ENCODE measurements at regions of chr4 and their contacts with region 1.

Region 1: DNA sequence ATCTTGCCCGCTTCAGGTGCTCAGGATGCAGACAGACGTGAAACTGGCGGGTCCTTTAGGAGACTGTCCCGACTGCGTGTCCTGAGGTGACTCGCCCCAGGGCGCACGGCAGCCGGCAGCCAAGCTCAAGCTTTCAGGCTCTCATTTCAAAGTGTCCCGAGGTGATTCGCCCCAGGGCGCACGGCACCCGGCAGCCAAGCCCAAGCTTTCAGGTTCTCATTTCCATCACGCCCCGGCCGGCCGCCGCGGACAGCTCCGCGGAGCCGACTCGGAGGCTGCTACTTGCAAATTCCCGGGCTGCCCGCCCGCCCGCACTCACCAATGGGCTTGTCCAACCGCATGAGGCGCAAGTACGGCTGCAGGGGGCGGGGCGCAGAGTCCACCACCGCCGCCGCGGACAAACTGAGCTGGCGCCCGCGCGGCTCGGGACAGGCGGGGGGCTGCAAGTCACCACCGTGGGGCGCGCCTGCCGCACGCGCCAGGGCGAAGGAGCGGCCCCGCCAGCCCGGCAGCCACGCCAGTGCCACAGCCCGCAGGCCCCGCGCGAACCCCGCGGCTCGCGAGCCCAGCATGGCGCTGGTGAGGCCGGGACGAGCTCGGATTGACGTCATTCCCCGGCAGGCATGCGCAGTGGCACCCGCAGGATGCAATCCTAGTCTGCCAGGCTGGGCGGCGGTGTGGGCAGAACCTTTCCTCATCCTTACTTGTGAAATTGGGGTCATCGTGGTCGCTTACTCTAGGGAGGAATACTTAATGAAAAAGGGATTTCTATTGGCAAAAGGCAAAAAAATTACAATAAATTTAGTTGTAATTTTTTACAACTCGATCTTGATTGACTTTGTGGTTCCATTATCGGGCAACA is at the start of gene COQ2:
- DNase-seq: peak; percentile 94 to 97 (median 95)
- H3K4me3 ChIP-seq: peak within 1 kb of the TSS; percentile 53 to 89 (median 77)
- H3K27ac ChIP-seq: peak within 1 kb of the TSS; percentile 61 to 99 (median 94)
- H3K27me3 ChIP-seq: no peaks in the 10 kb centered on the region
- CTCF ChIP-seq: peak in 55 of 56 donors; percentile 4 to 79 (median 48)
- total RNA-seq, gene COQ2: 3.6 to 10.1 (median 6.2) TPM

Region 2: DNA sequence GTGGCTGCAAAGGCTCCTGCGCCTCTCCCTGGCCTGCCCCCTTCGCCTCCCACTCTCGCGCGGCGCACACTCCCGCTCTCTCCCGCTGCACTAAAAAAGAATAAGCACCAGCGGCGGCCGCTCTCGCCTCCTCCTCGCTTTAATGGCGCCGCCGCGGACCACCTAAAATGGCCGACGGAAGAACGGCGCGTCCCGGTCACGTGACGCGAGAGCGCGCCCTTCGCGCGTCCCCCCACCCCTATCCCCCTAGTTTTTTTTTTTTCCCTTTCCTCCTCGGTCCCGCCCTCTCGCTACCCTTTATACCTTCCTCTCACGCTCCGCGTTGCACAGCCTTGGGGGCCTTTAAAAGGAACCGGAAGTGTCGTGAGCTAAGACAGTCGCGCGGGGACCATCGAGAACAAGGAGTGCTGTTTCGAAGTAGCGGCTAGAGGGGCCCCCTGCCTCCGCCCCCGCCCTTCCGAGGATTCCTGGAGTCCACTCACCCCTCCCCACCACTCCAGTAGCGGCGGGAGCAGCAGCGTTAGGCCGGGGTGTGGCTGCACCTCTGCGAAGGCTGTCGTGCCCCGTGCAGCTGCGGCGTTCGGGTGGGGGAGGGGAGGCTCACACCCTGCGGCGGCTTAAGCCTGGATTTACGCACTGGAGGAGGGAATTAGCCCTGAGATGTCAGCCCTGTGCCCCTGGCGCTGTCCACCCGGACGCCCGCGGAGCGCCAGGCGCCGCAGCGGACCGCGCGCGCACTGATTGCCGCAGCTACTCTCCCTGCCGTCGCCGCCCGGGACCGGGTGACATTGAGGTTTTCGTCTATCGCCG is 910.4 kb before region 1 on chr4 and contains the start of gene HNRNPD:
- intact Hi-C with region 1: loop called in 1 of 2 experiments (anchors 5 kb)
- DNase-seq: peak; percentile 91 to 98 (median 97)
- H3K4me3 ChIP-seq: peak within 1 kb of the TSS; percentile 65 to 99 (median 93)
- H3K27ac ChIP-seq: peak within 1 kb of the TSS; percentile 91 to 100 (median 98)
- H3K27me3 ChIP-seq: no peaks in the 10 kb centered on the region
- CTCF ChIP-seq: peak in 37 of 56 donors; percentile 5 to 63 (median 25)
- total RNA-seq, gene HNRNPD: 81.5 to 203 (median 140) TPM

Region 3: DNA sequence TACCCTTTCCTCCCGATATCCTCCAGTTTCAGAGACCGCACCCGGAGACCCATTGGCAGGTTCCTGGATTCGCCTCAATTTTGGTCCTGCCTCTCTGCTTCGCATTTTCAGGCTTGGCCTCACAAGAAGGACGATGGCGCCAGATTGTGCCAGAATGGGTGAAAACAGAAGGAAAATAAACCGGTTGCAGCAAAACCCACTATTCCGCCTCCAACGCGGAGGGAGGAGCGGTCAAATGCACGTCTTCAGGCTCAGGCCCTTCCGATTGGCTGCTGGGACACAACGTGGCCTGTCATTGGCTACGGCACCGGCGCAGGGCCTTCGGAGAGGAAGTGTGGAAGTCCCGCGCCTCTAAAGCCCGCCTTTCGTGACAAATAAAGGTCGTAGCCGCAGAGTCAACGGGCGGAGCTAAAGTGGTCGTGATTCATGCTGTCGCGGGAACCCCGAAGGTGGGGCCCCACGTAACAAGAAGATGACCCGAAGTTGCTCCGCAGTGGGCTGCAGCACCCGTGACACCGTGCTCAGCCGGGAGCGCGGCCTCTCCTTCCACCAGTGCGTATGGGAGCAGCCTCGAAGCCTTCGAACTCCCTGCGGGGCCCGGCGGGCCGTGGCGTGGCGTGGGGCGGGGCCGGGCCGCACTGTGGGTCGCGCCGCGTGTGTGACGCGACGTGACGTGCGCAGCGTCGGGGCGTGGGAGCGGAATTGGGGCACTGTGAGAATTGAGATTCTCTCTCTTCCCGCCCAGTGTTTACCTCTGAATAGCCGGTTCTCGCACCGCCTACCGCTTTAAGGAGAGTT is 383.9 kb before region 1 on chr4 and contains the start of gene THAP9:
- intact Hi-C with region 1: loop called in 1 of 2 experiments (anchors 5 kb)
- DNase-seq: peak; percentile 98 to 100 (median 99)
- H3K4me3 ChIP-seq: peak within 1 kb of the TSS; percentile 58 to 97 (median 85)
- H3K27ac ChIP-seq: peak within 1 kb of the TSS; percentile 80 to 100 (median 98)
- H3K27me3 ChIP-seq: no peaks in the 10 kb centered on the region
- CTCF ChIP-seq: peak in 20 of 56 donors; percentile 1 to 50 (median 15)
- total RNA-seq, gene THAP9: 4.1 to 16.4 (median 7.3) TPM

Region 4: DNA sequence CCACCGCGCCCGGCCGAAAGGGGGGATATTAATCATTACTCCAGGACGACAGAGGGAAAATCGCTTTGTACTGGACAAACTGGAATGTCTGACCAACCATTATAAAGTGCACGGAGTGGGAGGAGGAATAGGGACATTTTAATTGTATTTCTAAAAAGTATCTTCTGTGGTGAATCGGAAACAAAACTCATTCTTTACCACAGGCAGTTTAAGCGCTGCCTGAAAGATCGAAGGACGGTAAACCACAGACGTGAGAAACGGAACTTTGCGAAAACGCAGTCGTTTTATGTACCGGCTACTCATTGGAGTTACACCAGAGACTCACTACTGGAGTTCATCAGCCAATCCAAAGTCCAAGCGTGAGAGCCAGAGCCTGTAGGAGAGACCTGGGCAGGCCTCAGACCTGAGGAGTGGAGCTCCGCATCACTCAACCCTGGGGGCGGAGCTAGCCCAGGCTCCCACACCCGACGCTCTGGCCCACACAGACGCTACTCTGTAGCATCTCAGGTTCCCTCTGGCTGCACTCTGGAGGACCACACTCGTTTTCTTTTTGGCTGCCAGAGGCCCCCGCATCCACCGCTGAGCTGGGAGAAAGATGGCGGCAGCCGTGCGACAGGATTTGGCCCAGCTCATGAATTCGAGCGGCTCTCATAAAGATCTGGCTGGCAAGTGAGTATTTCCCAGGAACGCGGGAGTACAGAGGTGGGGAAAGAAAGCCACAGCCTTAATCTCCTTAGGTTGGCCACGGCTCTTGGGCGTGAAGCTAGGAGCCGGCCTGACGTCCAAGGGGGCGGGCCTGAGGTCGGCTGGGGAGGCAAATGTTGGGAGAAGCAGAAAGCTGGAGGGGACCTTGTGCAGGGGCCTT is 249.6 kb before region 1 on chr4 and contains the start of gene COPS4:
- intact Hi-C with region 1: loop called in 1 of 2 experiments (anchors 5 kb)
- DNase-seq: peak; percentile 87 to 99 (median 98)
- H3K4me3 ChIP-seq: peak within 1 kb of the TSS; percentile 65 to 97 (median 86)
- H3K27ac ChIP-seq: peak within 1 kb of the TSS; percentile 75 to 99 (median 93)
- H3K27me3 ChIP-seq: no peaks in the 10 kb centered on the region
- CTCF ChIP-seq: peak in 54 of 56 donors; percentile 15 to 72 (median 53)
- total RNA-seq, gene COPS4: 22.8 to 75.1 (median 50.8) TPM

Region 5: GRCh38 chr4:83124111-83124780 is 160.2 kb before region 1 on chr4:
- intact Hi-C with region 1: no loop called
- DNase-seq: no peak
- H3K4me3 ChIP-seq: no peak overlapping the region
- H3K27ac ChIP-seq: no peak overlapping the region
- H3K27me3 ChIP-seq: peaks cover 0 to 7% (median 0%) of the 10 kb centered on the region in 45 donors
- CTCF ChIP-seq: no peak

Region 6: DNA sequence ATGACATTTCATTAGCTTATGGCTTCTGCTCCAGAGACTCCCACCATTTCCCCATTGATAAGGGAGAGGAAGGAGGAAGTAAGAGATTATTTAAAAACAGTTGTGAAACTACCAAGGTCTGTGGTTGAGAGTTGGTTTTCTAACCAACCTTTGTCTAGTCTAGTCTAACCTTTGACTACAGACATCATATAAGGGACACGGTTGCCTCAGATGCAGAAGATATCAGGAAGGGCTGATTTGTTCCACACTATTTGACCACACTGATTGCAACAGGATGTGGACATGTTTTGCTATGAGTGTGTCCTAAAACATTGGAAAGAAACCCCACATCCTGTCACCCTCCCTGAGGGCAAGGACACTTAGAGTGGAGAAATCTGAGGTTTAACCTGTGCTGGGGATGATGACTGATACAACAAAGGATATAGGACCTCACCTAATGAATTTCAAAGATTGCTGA is 52.8 kb before region 1 on chr4:
- intact Hi-C with region 1: no loop called
- DNase-seq: no peak
- H3K4me3 ChIP-seq: no peak overlapping the region
- H3K27ac ChIP-seq: peak overlapping the region in 2 of 59 donors; percentile 17 to 47
- H3K27me3 ChIP-seq: no peaks in the 10 kb centered on the region
- CTCF ChIP-seq: no peak

Region 7: DNA sequence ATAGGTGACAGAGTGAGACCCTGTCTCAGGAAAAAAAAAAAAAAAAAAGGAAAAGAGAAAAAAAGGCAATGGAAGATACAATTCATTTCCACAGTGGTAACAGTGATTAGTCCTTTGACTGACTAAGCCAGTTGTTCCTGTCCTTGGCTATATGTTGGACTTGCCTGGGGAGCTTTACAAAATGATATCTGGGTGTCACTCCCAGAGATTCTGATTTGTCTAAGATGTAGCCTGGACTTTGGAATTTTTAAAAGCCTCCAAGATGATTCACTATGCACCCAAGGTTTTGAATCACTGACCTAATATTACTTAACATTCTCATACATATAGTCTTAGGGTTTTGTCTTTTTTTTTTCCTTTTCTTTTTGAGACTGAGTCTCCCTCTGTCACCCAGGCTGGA is 154.3 kb after region 1 on chr4:
- intact Hi-C with region 1: no loop called
- DNase-seq: no peak
- H3K4me3 ChIP-seq: no peak overlapping the region
- H3K27ac ChIP-seq: no peak overlapping the region
- H3K27me3 ChIP-seq: no peaks in the 10 kb centered on the region
- CTCF ChIP-seq: no peak

Region 8: DNA sequence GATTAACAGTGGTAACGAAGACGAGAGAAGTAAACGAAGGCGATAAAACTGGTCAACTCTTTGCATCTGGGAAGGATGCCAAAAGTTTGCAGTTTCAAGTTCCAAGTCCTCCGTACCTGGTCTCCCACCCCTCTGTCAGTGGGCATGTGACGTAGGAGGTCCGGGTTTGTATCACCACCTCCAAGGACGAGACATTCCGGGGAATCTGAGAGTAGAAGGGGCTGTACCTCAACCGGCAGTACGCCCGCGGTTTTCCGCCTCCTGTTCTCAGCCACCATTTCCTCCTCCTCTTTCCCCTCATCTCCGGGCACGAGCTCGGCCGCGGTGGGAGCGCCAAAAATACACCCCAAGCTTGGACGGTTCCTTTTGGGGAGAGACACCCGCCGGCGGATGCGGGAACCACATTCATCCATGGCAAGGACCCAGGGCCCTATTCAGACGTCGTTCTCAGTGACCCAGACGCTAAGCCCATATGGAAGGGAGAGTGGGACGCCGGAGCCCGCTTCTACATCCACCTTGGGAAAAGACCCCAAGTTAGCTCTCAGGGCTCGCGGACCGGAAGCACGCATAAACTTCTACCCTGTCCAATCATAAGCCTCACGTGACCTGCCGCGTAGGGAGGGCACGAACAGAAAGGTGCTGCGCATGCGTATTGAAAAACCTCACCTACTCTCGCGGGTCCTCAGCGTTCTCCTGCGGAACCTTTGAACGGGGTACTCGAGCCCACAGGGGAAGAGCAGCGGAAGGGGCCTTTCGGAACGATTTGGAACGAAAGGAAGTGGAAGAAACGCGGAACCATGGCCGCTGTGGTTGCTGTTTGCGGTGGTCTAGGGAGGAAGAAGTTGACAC is 171.1 kb after region 1 on chr4 and contains the starts of genes HELQ and MRPS18C:
- intact Hi-C with region 1: loop called in 1 of 2 experiments (anchors 5 kb)
- DNase-seq: peak; percentile 86 to 97 (median 95)
- H3K4me3 ChIP-seq: peak within 1 kb of the TSS; percentile 61 to 98 (median 88)
- H3K27ac ChIP-seq: peak within 1 kb of the TSS; percentile 73 to 99 (median 95)
- H3K27me3 ChIP-seq: no peaks in the 10 kb centered on the region
- CTCF ChIP-seq: peak in 40 of 56 donors; percentile 3 to 58 (median 26)
- total RNA-seq, gene HELQ: 9.8 to 22.5 (median 15.6) TPM
- total RNA-seq, gene MRPS18C: 27.0 to 71.6 (median 46.6) TPM

Region 9: GRCh38 chr4:83639849-83640493 is 355.5 kb after region 1 on chr4:
- intact Hi-C with region 1: loop called in 1 of 2 experiments (anchors 2 kb)
- DNase-seq: peak in 3 of 10 donors; percentile 22 to 69 (median 58)
- H3K4me3 ChIP-seq: no peak overlapping the region
- H3K27ac ChIP-seq: no peak overlapping the region
- H3K27me3 ChIP-seq: peaks cover 0 to 10% (median 0%) of the 10 kb centered on the region in 45 donors
- CTCF ChIP-seq: peak; percentile 64 to 96 (median 88)

Measured in dorsolateral prefrontal cortex (tissue), 120 donors.